MCF 10A (cell line): ENCODE measurements at regions of chr12 and their contacts with region 1.

Region 1: GRCh38 chr12:12696562-12697383 is 790 bp upstream of the GPR19 start:
- DNase-seq: peak; percentile 86
- H3K4me3 Mint-ChIP-seq: peak overlapping the region; percentile 88
- H3K27ac Mint-ChIP-seq: peak overlapping the region; percentile 99
- H3K4me1 Mint-ChIP-seq: peaks cover 16% of the 10 kb centered on the region
- H3K27me3 Mint-ChIP-seq: no peaks in the 10 kb centered on the region
- CTCF ChIP-seq: no peak

Region 2: GRCh38 chr12:12356886-12357718 is 339.7 kb before region 1 on chr12 and contains the start of gene BORCS5:
- CTCF ChIA-PET with region 1: interaction called, 4 read pairs
- POLR2A ChIA-PET with region 1: interaction called, 21 read pairs
- intact Hi-C with region 1: no loop called
- DNase-seq: peak; percentile 98
- H3K4me3 Mint-ChIP-seq: peak within 1 kb of the TSS; percentile 91
- H3K27ac Mint-ChIP-seq: peak within 1 kb of the TSS; percentile 94
- H3K4me1 Mint-ChIP-seq: no peaks in the 10 kb centered on the region
- H3K27me3 Mint-ChIP-seq: no peaks in the 10 kb centered on the region
- CTCF ChIP-seq: no peak
- total RNA-seq, gene BORCS5: 11.0 and 15.3 TPM in 2 replicates

Region 3: GRCh38 chr12:12934556-12934955 is 237.8 kb after region 1 on chr12:
- CTCF ChIA-PET with region 1: no interaction called
- POLR2A ChIA-PET with region 1: no interaction called
- intact Hi-C with region 1: no loop called
- DNase-seq: no peak
- H3K4me3 Mint-ChIP-seq: no peak overlapping the region
- H3K27ac Mint-ChIP-seq: no peak overlapping the region
- H3K4me1 Mint-ChIP-seq: no peaks in the 10 kb centered on the region
- H3K27me3 Mint-ChIP-seq: no peaks in the 10 kb centered on the region
- CTCF ChIP-seq: no peak